ENCODE measurements at regions of chr18 and their contacts with region 1.

Region 1: DNA sequence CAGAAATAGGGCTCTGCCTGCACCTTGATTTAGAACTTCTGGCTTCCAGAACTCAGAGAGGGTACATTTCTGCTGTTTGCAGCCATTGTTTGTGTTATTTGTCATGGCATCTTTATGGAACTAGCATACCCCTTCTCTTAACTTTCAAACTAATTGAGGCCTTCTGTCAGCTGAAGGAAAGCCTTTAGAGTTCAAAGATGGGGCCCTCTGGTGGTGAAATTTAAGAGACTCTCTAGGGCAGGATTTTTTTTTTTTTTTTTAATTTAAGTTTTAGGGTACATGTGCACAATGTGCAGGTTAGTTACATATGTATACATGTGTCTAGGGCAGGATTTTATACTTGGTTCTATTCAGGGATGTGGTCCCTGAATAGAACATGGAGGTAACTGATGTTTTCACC is 260.6 kb upstream of the LINC00305 start:
- DNase-seq: peak; percentile 55
- H3K4me3 ChIP-seq: no peak overlapping the region
- H3K27ac ChIP-seq: no peak overlapping the region
- H3K4me1 ChIP-seq: no peaks in the 10 kb centered on the region
- H3K27me3 ChIP-seq: no peaks in the 10 kb centered on the region
- CTCF ChIP-seq: peak; percentile 69

Region 2: DNA sequence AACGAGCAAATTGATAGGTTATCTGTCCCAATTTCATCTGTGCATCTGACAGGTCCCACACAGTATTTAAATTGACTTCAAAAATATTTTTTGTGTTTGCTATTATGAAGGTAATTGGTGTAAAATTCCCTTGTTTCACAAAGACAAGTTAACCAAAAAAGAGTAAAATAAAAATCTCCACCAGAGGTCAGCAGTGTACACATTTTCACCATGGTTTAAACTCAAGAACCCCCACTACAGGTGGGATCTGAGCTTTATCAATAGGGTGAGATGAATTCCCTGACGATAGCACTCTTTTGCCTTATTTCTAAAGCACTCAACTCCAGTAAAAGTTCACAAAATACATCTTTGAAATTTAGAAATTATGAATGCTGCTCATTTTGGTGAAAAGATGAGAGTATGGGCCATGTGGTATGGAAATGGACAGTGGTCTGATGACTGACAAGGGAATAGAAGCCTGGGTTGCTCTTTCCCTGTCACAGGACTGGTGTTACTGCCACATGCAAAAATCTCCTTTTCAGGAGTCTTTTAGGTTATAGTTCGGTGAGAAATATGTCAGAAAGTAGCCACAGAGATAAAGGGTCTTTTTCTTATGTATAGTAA is 371.6 kb before region 1 on chr18:
- CTCF ChIA-PET with region 1: interaction called, 5 read pairs
- POLR2A ChIA-PET with region 1: no interaction called
- intact Hi-C with region 1: loop called (anchors 1 kb)
- DNase-seq: peak; percentile 62
- H3K4me3 ChIP-seq: no peak overlapping the region
- H3K27ac ChIP-seq: no peak overlapping the region
- H3K4me1 ChIP-seq: no peaks in the 10 kb centered on the region
- H3K27me3 ChIP-seq: no peaks in the 10 kb centered on the region
- CTCF ChIP-seq: peak; percentile 71

Region 3: DNA sequence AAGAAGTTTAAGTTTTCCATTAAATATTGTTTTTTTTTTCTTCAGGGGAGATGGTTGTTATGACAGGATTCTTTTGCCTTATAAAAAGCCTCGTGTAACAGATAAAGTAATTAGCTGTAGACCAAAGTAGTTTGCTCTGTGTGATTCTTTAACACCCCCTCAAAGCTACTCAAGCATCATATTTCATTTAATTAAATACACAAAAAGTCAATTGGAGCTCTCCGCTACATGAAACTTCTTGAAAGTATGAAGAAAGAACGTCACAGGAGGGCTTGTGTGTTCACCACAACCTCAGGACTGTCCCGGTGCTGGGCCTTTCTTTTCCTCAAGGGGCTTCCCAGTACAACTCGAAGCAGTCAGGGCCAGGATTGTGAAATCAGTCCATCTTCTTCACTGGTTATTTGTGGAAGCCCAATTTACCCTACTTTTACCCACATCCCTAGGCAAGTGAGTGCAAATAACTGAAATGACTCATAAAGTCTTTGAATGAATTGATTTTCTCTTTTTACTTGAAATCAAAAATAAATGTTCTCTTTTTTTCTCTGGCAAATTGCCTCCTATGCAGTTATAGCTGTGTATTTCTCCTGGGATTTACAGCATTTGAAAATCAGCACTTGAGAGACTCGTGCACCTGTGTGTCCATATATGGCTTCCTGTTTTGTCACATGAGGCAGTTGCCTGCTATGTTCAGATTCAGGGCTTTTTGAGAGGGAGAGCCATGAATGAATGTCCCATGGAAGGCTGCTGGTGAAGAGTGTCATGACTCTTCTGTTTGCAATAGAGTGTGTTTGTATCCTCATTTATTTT is 309.2 kb before region 1 on chr18:
- CTCF ChIA-PET with region 1: no interaction called
- POLR2A ChIA-PET with region 1: no interaction called
- intact Hi-C with region 1: loop called (anchors 5 kb)
- DNase-seq: peak; percentile 36
- H3K4me3 ChIP-seq: no peak overlapping the region
- H3K27ac ChIP-seq: no peak overlapping the region
- H3K4me1 ChIP-seq: peaks cover 6% of the 10 kb centered on the region
- H3K27me3 ChIP-seq: no peaks in the 10 kb centered on the region
- CTCF ChIP-seq: no peak

Region 4: DNA sequence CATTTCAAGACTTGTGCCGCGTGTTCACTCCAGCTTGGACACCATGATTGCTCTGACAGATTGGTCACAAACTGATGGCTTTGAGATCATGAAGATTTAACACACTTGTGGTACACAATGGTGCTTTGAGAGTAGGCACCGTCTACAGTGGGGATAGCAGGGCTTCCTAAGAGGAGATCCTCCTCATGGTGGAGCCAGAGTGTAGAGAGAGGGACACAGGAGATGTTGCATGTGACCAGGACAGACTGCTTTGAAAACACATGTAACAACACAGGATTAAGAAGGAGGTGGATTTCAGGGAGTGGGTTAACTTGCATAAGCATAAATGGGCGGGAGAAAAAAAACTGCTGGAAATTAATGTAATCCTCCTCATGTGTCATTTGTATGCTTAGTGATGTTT is 164.9 kb before region 1 on chr18:
- CTCF ChIA-PET with region 1: interaction called, 7 read pairs
- POLR2A ChIA-PET with region 1: no interaction called
- intact Hi-C with region 1: loop called (anchors 1 kb)
- DNase-seq: peak; percentile 69
- H3K4me3 ChIP-seq: no peak overlapping the region
- H3K27ac ChIP-seq: no peak overlapping the region
- H3K4me1 ChIP-seq: peaks cover 15% of the 10 kb centered on the region
- H3K27me3 ChIP-seq: no peaks in the 10 kb centered on the region
- CTCF ChIP-seq: peak; percentile 71

Measured in A673 (cell line).